CD4-positive, alpha-beta T cell (primary cell): ENCODE measurements at regions of chr3 and their contacts with region 1.

Region 1: GRCh38 chr3:197749601-197750395 is at the start of gene FYTTD1:
- DNase-seq: peak; percentile 74 to 96 (median 88)
- ATAC-seq: peak; percentile 70
- H3K4me3 ChIP-seq: peak within 1 kb of the TSS; percentile 85
- H3K4me3 Mint-ChIP-seq: peak within 1 kb of the TSS; percentile 97
- H3K27ac ChIP-seq: peak within 1 kb of the TSS; percentile 82
- H3K27ac Mint-ChIP-seq: peak within 1 kb of the TSS; percentile 96
- H3K4me1 ChIP-seq: peaks cover 20% of the 10 kb centered on the region
- H3K4me1 Mint-ChIP-seq: peaks cover 51% of the 10 kb centered on the region
- H3K27me3 ChIP-seq: no peaks in the 10 kb centered on the region
- H3K27me3 Mint-ChIP-seq: no peaks in the 10 kb centered on the region
- CTCF ChIP-seq: peak; percentile 30
- total RNA-seq, gene FYTTD1: 75.8 to 78.2 TPM

Region 2: GRCh38 chr3:197554562-197555280 is 195.1 kb before region 1 on chr3:
- CTCF ChIA-PET with region 1: no interaction called
- POLR2A ChIA-PET with region 1: interaction called, 5 read pairs
- intact Hi-C with region 1: loop called in 1 of 2 experiments (anchors 5 kb)
- DNase-seq: peak; percentile 79 to 95 (median 90)
- ATAC-seq: peak; percentile 93
- H3K4me3 ChIP-seq: peak overlapping the region; percentile 95
- H3K4me3 Mint-ChIP-seq: peak overlapping the region; percentile 96
- H3K27ac ChIP-seq: peak overlapping the region; percentile 81
- H3K27ac Mint-ChIP-seq: peak overlapping the region; percentile 84
- H3K4me1 ChIP-seq: peaks cover 21% of the 10 kb centered on the region
- H3K4me1 Mint-ChIP-seq: peaks cover 31% of the 10 kb centered on the region
- H3K27me3 ChIP-seq: peaks cover 0 to 8% of the 10 kb centered on the region in 2 experiments
- H3K27me3 Mint-ChIP-seq: peaks cover 15% of the 10 kb centered on the region
- CTCF ChIP-seq: peak; percentile 64

Region 3: DNA sequence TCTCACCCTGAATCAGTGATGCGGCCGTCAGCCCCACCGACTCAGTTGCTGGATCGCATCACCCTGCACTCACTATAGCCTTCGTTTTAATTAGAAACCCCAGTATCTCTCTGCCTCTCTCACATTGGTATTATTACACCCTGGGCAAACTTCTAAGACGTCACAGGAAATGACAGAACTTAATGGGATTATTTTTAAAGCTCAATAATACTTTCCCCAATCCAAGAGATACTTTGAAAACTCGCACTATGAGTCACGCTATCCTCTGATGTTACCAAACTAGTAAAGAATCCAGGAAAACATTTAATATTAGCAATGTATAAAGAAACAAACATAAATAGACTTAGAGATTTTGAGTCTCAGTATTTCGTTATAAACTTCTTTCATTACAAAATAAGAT is 49.7 kb before region 1 on chr3:
- CTCF ChIA-PET with region 1: no interaction called
- POLR2A ChIA-PET with region 1: no interaction called
- intact Hi-C with region 1: loop called in 1 of 2 experiments (anchors 5 kb)
- DNase-seq: no peak
- ATAC-seq: no peak
- H3K4me3 ChIP-seq: no peak overlapping the region
- H3K4me3 Mint-ChIP-seq: no peak overlapping the region
- H3K27ac ChIP-seq: no peak overlapping the region
- H3K27ac Mint-ChIP-seq: no peak overlapping the region
- H3K4me1 ChIP-seq: no peaks in the 10 kb centered on the region
- H3K4me1 Mint-ChIP-seq: no peaks in the 10 kb centered on the region
- H3K27me3 ChIP-seq: no peaks in the 10 kb centered on the region
- H3K27me3 Mint-ChIP-seq: no peaks in the 10 kb centered on the region
- CTCF ChIP-seq: no peak

Region 4: GRCh38 chr3:197711973-197712707 is 37.7 kb before region 1 on chr3:
- CTCF ChIA-PET with region 1: interaction called, 9 read pairs
- POLR2A ChIA-PET with region 1: interaction called, 36 read pairs
- intact Hi-C with region 1: loop called in 1 of 2 experiments (anchors 1 kb)
- DNase-seq: peak; percentile 71 to 97 (median 82)
- ATAC-seq: peak; percentile 98
- H3K4me3 ChIP-seq: peak overlapping the region; percentile 47
- H3K4me3 Mint-ChIP-seq: peak overlapping the region; percentile 80
- H3K27ac ChIP-seq: peak overlapping the region; percentile 74 to 87
- H3K27ac Mint-ChIP-seq: peak overlapping the region; percentile 88
- H3K4me1 ChIP-seq: peaks cover 9% of the 10 kb centered on the region
- H3K4me1 Mint-ChIP-seq: peaks cover 25% of the 10 kb centered on the region
- H3K27me3 ChIP-seq: no peaks in the 10 kb centered on the region
- H3K27me3 Mint-ChIP-seq: no peaks in the 10 kb centered on the region
- CTCF ChIP-seq: no peak

Region 5: DNA sequence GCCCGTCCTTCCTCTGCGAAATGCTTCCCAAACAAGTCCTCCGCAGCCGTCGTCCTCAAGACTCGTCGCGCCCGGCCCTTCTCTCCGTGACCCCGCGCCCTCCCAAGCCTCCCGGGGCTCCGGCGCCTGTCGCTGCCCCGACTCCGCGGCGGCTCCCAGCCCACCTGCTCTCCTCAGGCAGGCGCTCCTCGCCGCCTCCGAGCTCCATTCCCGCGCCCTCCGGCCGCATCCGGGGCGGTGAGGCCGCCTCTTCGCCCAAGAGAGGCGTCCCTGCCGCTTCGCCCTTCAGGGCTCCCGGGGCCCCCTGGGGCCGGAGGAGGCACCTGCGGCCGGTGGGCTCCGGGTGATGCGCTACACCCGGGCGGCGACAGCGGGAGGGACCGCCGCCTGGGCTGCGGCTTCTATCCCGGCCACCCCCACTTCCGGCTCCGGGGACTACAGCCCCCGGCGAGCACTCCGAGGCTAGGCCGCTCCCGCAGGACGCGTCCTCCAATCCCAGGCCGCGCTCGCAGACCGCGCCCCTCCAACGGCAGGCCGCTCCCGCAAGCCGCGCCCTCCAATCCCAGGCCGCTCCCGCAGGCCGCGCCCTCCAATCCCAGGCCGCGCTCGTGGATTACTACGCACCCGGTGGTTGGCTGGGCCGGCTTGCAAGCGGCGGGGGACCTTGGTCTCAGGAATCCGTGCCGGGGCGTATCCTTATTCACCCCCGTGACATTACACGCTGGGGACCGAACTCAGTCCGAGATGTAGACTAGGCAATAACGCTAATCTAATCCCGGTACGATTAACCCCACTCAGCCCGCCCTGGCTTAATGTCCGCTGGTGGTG is 13.1 kb before region 1 on chr3 and contains the start of gene RUBCN:
- CTCF ChIA-PET with region 1: interaction called, 4 read pairs
- POLR2A ChIA-PET with region 1: interaction called, 5 read pairs
- intact Hi-C with region 1: loop called (anchors 1 kb)
- DNase-seq: peak; percentile 82 to 98 (median 90)
- ATAC-seq: peak; percentile 95
- H3K4me3 ChIP-seq: peak within 1 kb of the TSS; percentile 78
- H3K4me3 Mint-ChIP-seq: peak within 1 kb of the TSS; percentile 98
- H3K27ac ChIP-seq: peak within 1 kb of the TSS; percentile 68 to 72
- H3K27ac Mint-ChIP-seq: peak within 1 kb of the TSS; percentile 87
- H3K4me1 ChIP-seq: peaks cover 36% of the 10 kb centered on the region
- H3K4me1 Mint-ChIP-seq: peaks cover 36% of the 10 kb centered on the region
- H3K27me3 ChIP-seq: no peaks in the 10 kb centered on the region
- H3K27me3 Mint-ChIP-seq: no peaks in the 10 kb centered on the region
- CTCF ChIP-seq: no peak
- total RNA-seq, gene RUBCN: 35.3 to 38.9 TPM

Region 6: GRCh38 chr3:197791113-197791891 is 41.5 kb after region 1 on chr3 and contains the start of gene LRCH3:
- CTCF ChIA-PET with region 1: interaction called, 4 read pairs
- POLR2A ChIA-PET with region 1: interaction called, 28 read pairs
- intact Hi-C with region 1: loop called (anchors 2 to 5 kb)
- DNase-seq: peak; percentile 68 to 90 (median 77)
- ATAC-seq: peak; percentile 72
- H3K4me3 ChIP-seq: peak within 1 kb of the TSS; percentile 97
- H3K4me3 Mint-ChIP-seq: peak within 1 kb of the TSS; percentile 95
- H3K27ac ChIP-seq: peak within 1 kb of the TSS; percentile 92 to 97
- H3K27ac Mint-ChIP-seq: peak within 1 kb of the TSS; percentile 98
- H3K4me1 ChIP-seq: peaks cover 25% of the 10 kb centered on the region
- H3K4me1 Mint-ChIP-seq: peaks cover 57% of the 10 kb centered on the region
- H3K27me3 ChIP-seq: no peaks in the 10 kb centered on the region
- H3K27me3 Mint-ChIP-seq: no peaks in the 10 kb centered on the region
- CTCF ChIP-seq: no peak
- total RNA-seq, gene LRCH3: 31.5 to 37.6 TPM

Region 7: GRCh38 chr3:197801891-197802778 is 52.3 kb after region 1 on chr3:
- CTCF ChIA-PET with region 1: interaction called, 3 read pairs
- POLR2A ChIA-PET with region 1: no interaction called
- intact Hi-C with region 1: loop called in 1 of 2 experiments (anchors 2 kb)
- DNase-seq: peak in 5 of 14 experiments; percentile 19 to 66 (median 52)
- ATAC-seq: peak; percentile 68
- H3K4me3 ChIP-seq: no peak overlapping the region
- H3K4me3 Mint-ChIP-seq: no peak overlapping the region
- H3K27ac ChIP-seq: peak overlapping the region in 1 of 2 donors; percentile 23
- H3K27ac Mint-ChIP-seq: peak overlapping the region; percentile 65
- H3K4me1 ChIP-seq: peaks cover 22% of the 10 kb centered on the region
- H3K4me1 Mint-ChIP-seq: peaks cover 59% of the 10 kb centered on the region
- H3K27me3 ChIP-seq: no peaks in the 10 kb centered on the region
- H3K27me3 Mint-ChIP-seq: no peaks in the 10 kb centered on the region
- CTCF ChIP-seq: peak; percentile 49